MCF 10A (cell line): ENCODE measurements at regions of chr6 and their contacts with region 1.

Region 1: DNA sequence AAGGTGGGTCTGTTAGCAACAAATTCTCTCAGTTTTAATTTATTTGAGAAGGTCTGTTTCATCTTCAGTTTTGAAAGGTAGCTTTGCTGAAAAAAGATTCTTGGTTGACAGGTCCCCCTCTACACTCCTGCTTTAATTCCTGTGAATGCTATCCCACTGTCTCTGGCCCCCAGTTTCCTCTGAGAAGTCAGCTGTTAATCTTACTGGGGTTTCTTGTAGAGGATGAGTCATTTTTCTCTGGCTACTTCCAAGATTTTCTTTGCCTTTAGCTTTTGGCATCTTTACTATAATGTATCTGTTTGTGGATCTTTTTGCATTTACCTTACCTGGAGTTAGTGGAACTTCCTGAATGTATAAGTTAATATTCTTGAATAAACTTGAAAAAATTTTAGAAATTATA is 122.7 kb downstream of the MMS22L start:
- DNase-seq: peak; percentile 13
- H3K4me3 Mint-ChIP-seq: no peak overlapping the region
- H3K27ac Mint-ChIP-seq: no peak overlapping the region
- H3K4me1 Mint-ChIP-seq: no peaks in the 10 kb centered on the region
- H3K27me3 Mint-ChIP-seq: no peaks in the 10 kb centered on the region
- CTCF ChIP-seq: no peak

Region 2: GRCh38 chr6:97175806-97176205 is 15.5 kb after region 1 on chr6:
- CTCF ChIA-PET with region 1: no interaction called
- POLR2A ChIA-PET with region 1: no interaction called
- intact Hi-C with region 1: no loop called
- DNase-seq: no peak
- H3K4me3 Mint-ChIP-seq: no peak overlapping the region
- H3K27ac Mint-ChIP-seq: no peak overlapping the region
- H3K4me1 Mint-ChIP-seq: no peaks in the 10 kb centered on the region
- H3K27me3 Mint-ChIP-seq: no peaks in the 10 kb centered on the region
- CTCF ChIP-seq: no peak

Region 3: GRCh38 chr6:97186416-97186999 is 26.2 kb after region 1 on chr6:
- CTCF ChIA-PET with region 1: interaction called, 14 read pairs
- POLR2A ChIA-PET with region 1: no interaction called
- intact Hi-C with region 1: no loop called
- DNase-seq: peak; percentile 78
- H3K4me3 Mint-ChIP-seq: no peak overlapping the region
- H3K27ac Mint-ChIP-seq: no peak overlapping the region
- H3K4me1 Mint-ChIP-seq: peaks cover 6% of the 10 kb centered on the region
- H3K27me3 Mint-ChIP-seq: no peaks in the 10 kb centered on the region
- CTCF ChIP-seq: peak; percentile 77

Region 4: DNA sequence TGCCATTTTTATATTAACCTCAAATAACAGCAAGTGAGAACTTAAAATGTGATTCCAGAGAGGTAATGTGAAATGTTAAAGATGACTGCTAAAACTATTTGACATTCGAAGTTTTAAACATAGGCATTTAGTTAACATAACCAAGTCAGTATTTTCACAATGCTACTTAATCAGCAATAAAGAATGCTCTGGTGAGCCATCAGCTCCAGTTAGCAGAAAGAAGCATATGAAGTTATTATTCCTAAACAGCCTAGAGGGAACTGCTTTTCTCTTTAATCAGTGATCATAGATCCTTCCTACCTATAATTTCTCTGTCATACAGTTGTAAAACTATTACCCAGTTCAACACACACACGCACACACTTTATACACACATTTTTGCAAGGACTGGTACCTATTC is 62.6 kb after region 1 on chr6:
- CTCF ChIA-PET with region 1: no interaction called
- POLR2A ChIA-PET with region 1: no interaction called
- intact Hi-C with region 1: no loop called
- DNase-seq: no peak
- H3K4me3 Mint-ChIP-seq: no peak overlapping the region
- H3K27ac Mint-ChIP-seq: no peak overlapping the region
- H3K4me1 Mint-ChIP-seq: no peaks in the 10 kb centered on the region
- H3K27me3 Mint-ChIP-seq: no peaks in the 10 kb centered on the region
- CTCF ChIP-seq: no peak